ENCODE measurements at regions of chr9 and their contacts with region 1.

Region 1: GRCh38 chr9:126490871-126491567 is 122.7 kb upstream of the LMX1B start:
- DNase-seq: peak; percentile 54 to 72 (median 63)
- H3K4me3 ChIP-seq: no peak overlapping the region
- H3K4me3 Mint-ChIP-seq: peak overlapping the region in 3 of 8 donors; percentile 16 to 47 (median 31)
- H3K27ac ChIP-seq: no peak overlapping the region
- H3K27ac Mint-ChIP-seq: peak overlapping the region in 1 of 7 donors; percentile 62
- H3K4me1 ChIP-seq: peaks cover 13% of the 10 kb centered on the region
- H3K4me1 Mint-ChIP-seq: peaks cover 0 to 15% (median 10%) of the 10 kb centered on the region in 4 donors
- H3K27me3 ChIP-seq: no peaks in the 10 kb centered on the region
- H3K27me3 Mint-ChIP-seq: peaks cover 0 to 2% of the 10 kb centered on the region in 2 donors

Region 2: DNA sequence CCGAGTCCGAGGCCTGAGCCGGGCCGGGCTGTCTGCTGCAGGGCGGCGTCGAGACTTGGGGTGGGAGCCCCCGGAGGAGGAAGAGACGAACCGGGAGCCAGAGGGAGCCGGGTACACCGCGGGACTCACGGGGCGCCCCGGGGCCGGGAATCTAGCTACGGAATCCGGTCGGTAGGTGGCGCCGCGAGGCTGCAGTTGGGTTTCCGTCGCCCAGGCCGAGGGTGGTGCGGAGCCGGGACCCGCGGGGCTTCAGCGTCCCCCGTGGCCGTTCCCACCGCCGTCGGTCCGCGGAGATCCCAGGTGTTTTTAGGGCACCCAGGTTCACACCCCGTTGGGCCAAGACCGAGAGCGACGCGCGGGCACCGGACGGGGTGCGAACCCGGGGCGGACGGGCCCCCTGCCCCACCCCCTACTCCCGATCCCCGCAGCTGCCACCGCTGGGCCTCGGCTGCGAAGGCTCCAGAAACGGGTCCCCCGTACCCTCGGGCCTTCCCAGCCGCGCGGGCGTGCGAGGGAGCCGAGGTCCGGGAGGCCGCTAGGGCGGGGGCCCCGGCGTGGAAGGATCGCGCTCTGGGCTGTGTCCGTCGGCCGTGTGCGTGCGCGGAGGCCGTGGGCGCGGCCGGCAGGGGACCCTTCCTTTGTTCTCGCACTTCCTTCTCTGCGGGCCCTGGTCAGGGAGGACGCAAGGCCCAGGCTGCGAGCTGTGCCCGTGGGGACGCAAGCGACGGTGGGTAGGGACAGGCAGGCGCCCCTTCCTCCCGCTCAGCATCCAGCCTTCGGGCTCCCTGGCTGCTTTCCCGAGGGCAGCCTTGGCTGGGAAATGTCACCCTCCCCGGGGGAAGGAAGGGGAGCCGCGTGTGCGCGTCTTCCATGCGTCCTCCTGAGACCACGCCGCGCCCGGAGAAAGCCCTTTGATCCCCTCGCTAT is 1082.8 kb before region 1 on chr9:
- CTCF ChIA-PET with region 1: interaction called, 32 read pairs
- POLR2A ChIA-PET with region 1: no interaction called
- intact Hi-C with region 1: no loop called
- DNase-seq: peak; percentile 61 to 68 (median 65)
- H3K4me3 ChIP-seq: peak overlapping the region in 1 of 2 donors; percentile 35
- H3K4me3 Mint-ChIP-seq: peak overlapping the region; percentile 57 to 82 (median 73)
- H3K27ac ChIP-seq: no peak overlapping the region
- H3K27ac Mint-ChIP-seq: no peak overlapping the region
- H3K4me1 ChIP-seq: peaks cover 9% of the 10 kb centered on the region
- H3K4me1 Mint-ChIP-seq: peaks cover 4 to 12% (median 10%) of the 10 kb centered on the region in 4 donors
- H3K27me3 ChIP-seq: no peaks in the 10 kb centered on the region
- H3K27me3 Mint-ChIP-seq: peaks cover 7 to 27% of the 10 kb centered on the region in 2 donors

Region 3: DNA sequence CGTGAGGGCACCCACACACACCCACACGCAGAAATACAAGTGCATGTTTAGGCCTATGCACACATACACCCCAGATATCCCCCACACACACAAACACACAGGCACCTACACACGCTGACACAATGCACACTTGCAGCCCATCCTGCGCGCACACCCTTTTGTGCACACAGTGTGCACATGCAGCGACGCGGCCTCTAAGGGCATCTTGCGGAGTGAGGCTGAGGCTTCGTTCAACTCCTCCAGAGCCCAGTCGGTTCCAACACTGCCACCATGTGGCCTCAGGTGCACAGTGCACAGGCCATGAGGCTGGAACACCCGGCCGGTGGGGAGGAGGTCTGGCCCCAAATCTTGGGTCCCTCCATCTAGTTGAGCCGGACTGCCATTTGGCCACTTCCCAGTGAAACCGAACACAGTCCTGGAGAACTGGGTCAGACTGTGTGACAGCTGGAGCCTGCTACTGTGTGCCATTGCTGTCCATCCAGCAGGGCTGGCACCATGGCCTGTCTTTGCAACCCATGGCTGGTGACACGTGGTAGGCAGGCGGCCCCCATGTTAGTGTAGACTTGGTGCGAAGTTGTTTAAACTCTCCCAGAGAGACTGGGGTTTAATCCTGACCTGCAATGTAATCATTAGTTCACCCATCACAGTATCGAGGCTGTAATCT is 262.1 kb before region 1 on chr9:
- CTCF ChIA-PET with region 1: interaction called, 6 read pairs
- POLR2A ChIA-PET with region 1: no interaction called
- intact Hi-C with region 1: loop called (anchors 1 kb)
- DNase-seq: peak; percentile 47 to 58 (median 51)
- H3K4me3 ChIP-seq: no peak overlapping the region
- H3K4me3 Mint-ChIP-seq: peak overlapping the region in 1 of 8 donors; percentile 11
- H3K27ac ChIP-seq: no peak overlapping the region
- H3K27ac Mint-ChIP-seq: no peak overlapping the region
- H3K4me1 ChIP-seq: peaks cover 3% of the 10 kb centered on the region
- H3K4me1 Mint-ChIP-seq: peaks cover 0 to 8% (median 4%) of the 10 kb centered on the region in 4 donors
- H3K27me3 ChIP-seq: peaks cover 4% of the 10 kb centered on the region
- H3K27me3 Mint-ChIP-seq: peaks cover 28 to 46% of the 10 kb centered on the region in 2 donors

Region 4: DNA sequence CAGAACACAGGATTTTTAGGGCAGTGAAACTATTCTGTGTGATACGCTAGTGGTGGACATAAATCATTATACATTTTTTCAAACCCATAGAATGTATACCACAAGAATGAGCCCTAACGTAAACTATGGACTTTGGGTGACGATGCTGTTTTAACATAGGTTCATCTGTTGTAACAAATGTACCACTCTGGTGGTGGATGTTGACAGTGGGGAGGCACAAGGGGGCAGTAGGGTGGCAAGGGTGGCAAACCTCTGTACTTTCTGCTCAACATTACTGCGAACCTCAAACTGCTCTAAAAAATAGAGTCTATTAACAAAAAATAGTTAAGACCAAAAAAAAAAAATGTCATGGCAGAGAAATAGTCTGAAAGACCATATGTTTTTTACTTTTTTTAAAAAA is 173.5 kb before region 1 on chr9:
- CTCF ChIA-PET with region 1: interaction called, 109 read pairs
- POLR2A ChIA-PET with region 1: interaction called, 5 read pairs
- intact Hi-C with region 1: loop called (anchors 1 kb)
- DNase-seq: peak; percentile 35 to 52 (median 40)
- H3K4me3 ChIP-seq: no peak overlapping the region
- H3K4me3 Mint-ChIP-seq: no peak overlapping the region
- H3K27ac ChIP-seq: no peak overlapping the region
- H3K27ac Mint-ChIP-seq: peak overlapping the region in 1 of 7 donors; percentile 59
- H3K4me1 ChIP-seq: peaks cover 4% of the 10 kb centered on the region
- H3K4me1 Mint-ChIP-seq: peaks cover 2 to 12% (median 9%) of the 10 kb centered on the region in 4 donors
- H3K27me3 ChIP-seq: no peaks in the 10 kb centered on the region
- H3K27me3 Mint-ChIP-seq: peaks cover 0 to 2% of the 10 kb centered on the region in 2 donors

Region 5: DNA sequence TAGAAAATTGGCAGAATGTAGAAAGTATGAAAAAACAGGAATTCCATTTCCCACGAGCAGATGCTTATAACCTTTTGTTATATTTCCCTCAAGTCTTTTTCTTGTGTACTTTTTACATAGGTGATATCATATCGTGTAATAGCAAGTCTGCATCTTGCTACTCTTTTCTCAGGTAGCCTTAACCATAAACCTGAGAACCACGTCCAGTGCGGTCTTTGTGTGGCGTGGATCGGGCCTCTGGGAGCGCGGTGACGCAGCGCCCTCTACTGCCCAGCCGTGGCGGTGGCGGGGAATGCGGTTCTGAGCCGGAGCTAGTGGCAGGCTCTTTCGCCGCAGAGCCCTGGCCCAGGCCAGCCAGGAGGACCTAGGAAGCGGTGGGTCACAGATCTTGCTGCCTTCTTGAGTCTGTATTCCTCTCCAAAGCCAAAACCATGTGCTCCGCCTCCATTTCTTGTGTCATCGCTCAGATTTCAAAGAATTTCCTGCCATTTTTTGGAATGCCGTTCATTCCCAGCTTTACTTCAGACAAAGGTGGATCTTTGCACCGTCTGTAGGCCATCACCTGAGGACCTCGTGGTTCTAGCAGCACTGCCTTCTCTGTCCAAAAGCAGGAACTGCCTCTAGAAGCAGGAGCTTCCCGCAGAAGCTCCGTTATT is 92.5 kb before region 1 on chr9:
- CTCF ChIA-PET with region 1: interaction called, 80 read pairs
- POLR2A ChIA-PET with region 1: no interaction called
- intact Hi-C with region 1: loop called (anchors 2 kb)
- DNase-seq: peak; percentile 56 to 73 (median 57)
- H3K4me3 ChIP-seq: no peak overlapping the region
- H3K4me3 Mint-ChIP-seq: peak overlapping the region in 7 of 8 donors; percentile 24 to 73 (median 67)
- H3K27ac ChIP-seq: no peak overlapping the region
- H3K27ac Mint-ChIP-seq: peak overlapping the region in 6 of 7 donors; percentile 46 to 86 (median 64)
- H3K4me1 ChIP-seq: peaks cover 30% of the 10 kb centered on the region
- H3K4me1 Mint-ChIP-seq: peaks cover 23 to 44% (median 37%) of the 10 kb centered on the region in 4 donors
- H3K27me3 ChIP-seq: no peaks in the 10 kb centered on the region
- H3K27me3 Mint-ChIP-seq: no peaks in the 10 kb centered on the region

Region 6: GRCh38 chr9:126449725-126450667 is 41.0 kb before region 1 on chr9:
- CTCF ChIA-PET with region 1: interaction called, 23 read pairs
- POLR2A ChIA-PET with region 1: no interaction called
- intact Hi-C with region 1: no loop called
- DNase-seq: no peak
- H3K4me3 ChIP-seq: no peak overlapping the region
- H3K4me3 Mint-ChIP-seq: no peak overlapping the region
- H3K27ac ChIP-seq: no peak overlapping the region
- H3K27ac Mint-ChIP-seq: peak overlapping the region in 2 of 7 donors; percentile 29 to 37
- H3K4me1 ChIP-seq: no peaks in the 10 kb centered on the region
- H3K4me1 Mint-ChIP-seq: peaks cover 3 to 11% (median 9%) of the 10 kb centered on the region in 4 donors
- H3K27me3 ChIP-seq: no peaks in the 10 kb centered on the region
- H3K27me3 Mint-ChIP-seq: no peaks in the 10 kb centered on the region

Region 7: DNA sequence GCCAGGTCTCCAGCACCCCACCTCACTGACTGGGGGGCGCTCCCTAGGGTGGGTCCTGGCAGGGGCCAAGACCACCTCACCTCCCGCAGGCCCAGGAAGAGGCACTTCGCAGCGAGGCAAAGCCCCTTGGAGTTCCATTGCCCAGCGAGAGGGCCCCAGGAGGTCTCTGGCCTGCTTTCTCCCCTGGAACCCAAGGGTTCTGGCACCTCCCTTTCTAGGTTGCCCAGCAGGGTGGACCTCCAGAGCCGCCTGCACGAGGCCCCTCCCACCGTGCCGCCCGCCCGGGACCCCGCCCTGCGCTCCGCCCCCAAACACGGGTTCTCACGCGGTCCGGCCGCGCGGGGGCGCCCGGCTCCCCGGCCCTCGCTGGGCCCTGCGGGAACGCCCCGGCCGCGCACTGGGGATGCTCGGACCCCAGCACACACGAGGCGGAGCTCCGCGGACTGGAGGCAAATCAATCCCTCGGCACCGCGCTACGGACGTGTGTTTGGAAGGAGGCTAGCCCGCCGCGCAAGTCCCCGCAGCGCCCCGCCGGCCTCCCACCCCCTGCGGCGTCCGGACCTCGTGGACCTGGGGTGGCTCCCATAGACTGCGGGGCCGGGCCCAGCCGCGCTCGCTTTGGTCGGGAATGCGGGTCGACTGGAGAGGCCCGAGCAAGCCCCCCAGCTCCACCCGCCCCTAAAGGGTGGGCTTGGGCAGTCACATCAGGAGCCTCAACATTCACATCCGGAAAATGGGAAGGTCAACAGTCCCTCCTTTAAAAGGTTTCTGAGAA is 23.2 kb after region 1 on chr9:
- CTCF ChIA-PET with region 1: interaction called, 14 read pairs
- POLR2A ChIA-PET with region 1: no interaction called
- intact Hi-C with region 1: no loop called
- DNase-seq: peak in 4 of 5 donors; percentile 40 to 52 (median 51)
- H3K4me3 ChIP-seq: no peak overlapping the region
- H3K4me3 Mint-ChIP-seq: peak overlapping the region in 2 of 8 donors; percentile 26 to 48
- H3K27ac ChIP-seq: no peak overlapping the region
- H3K27ac Mint-ChIP-seq: peak overlapping the region in 1 of 7 donors; percentile 19
- H3K4me1 ChIP-seq: peaks cover 33% of the 10 kb centered on the region
- H3K4me1 Mint-ChIP-seq: peaks cover 16 to 48% (median 28%) of the 10 kb centered on the region in 4 donors
- H3K27me3 ChIP-seq: peaks cover 12% of the 10 kb centered on the region
- H3K27me3 Mint-ChIP-seq: peaks cover 17 to 31% of the 10 kb centered on the region in 2 donors